GM12878 (cell line): ENCODE measurements at regions of chr14 and their contacts with region 1.

Region 1: DNA sequence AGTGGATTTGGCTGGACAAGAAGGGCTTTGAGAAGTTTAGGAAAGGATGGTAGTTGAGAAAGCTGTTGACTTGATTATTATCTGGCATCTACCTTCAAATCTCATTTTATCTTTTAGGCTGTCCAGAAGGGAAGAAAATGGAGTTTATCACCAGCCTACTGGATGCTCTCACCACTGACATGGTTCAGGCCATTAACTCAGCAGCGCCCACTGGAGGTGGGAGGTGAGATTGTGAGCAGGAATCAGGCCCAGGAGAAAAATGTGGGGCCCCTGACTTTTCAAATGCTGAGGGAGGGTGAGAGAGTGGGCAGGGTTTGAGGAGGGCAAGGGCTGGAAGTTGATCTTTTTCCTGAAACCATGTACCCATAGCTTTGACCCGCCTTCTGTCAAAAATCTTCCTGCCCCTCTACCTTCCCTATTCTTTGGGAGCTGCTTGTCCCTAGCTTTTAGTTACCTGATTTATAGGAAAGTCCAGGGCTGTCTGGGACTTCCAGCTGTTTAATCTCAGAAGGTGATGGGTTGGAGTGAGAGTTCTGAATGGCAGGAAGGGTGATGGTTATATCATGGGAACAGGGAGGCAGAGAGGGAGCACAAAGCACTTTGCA is 134.2 kb downstream of the SMOC1 start:
- DNase-seq: no peak
- ATAC-seq: peak; percentile 78
- H3K4me3 ChIP-seq: no peak overlapping the region
- H3K27ac ChIP-seq: no peak overlapping the region
- H3K4me1 ChIP-seq: peaks cover 27% of the 10 kb centered on the region
- H3K27me3 ChIP-seq: no peaks in the 10 kb centered on the region
- CTCF ChIP-seq: peak; percentile 50 to 90 (median 86)
- EP300 ChIP-seq: no peak
- POLR2A ChIP-seq: no peak
- RAD21 ChIP-seq: peak; percentile 59

Region 2: DNA sequence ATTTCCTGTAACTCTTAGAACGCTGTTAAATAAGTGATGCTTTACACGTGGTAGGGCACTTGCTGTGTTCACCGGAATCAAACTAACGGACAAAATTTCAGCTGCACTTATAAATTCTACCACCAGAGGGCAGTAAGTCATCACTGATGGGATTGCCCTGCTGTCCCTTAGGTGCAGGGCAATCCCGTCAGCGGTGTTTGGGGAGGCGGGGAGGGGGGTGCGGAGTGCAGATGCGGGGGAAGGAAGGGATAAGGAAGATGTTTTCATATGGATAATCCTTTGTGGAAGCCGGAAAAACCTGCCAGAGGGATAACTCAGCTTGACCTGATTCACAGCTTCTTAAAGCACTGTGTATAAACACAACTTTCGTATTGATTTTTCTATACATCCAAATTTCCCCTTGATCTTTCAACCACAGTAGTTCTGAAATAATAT is 194.6 kb before region 1 on chr14:
- CTCF ChIA-PET with region 1: interaction called, 20 read pairs
- POLR2A ChIA-PET with region 1: no interaction called
- RAD21 ChIA-PET with region 1: no interaction called
- SMC1A ChIA-PET with region 1: interaction called, 4 read pairs
- in situ Hi-C with region 1: no loop called
- intact Hi-C with region 1: no loop called
- DNase-seq: peak; percentile 55
- ATAC-seq: peak; percentile 95
- H3K4me3 ChIP-seq: no peak overlapping the region
- H3K27ac ChIP-seq: no peak overlapping the region
- H3K4me1 ChIP-seq: no peaks in the 10 kb centered on the region
- H3K27me3 ChIP-seq: no peaks in the 10 kb centered on the region; a peak in 1 of 4 replicates
- CTCF ChIP-seq: peak; percentile 71 to 79 (median 75)
- EP300 ChIP-seq: no peak
- POLR2A ChIP-seq: no peak
- RAD21 ChIP-seq: peak; percentile 99

Region 3: GRCh38 chr14:69879175-69880043 is 134.0 kb before region 1 on chr14 and contains the start of gene SMOC1:
- CTCF ChIA-PET with region 1: interaction called, 27 read pairs
- POLR2A ChIA-PET with region 1: no interaction called
- RAD21 ChIA-PET with region 1: interaction called, 3 read pairs
- SMC1A ChIA-PET with region 1: interaction called, 4 read pairs
- in situ Hi-C with region 1: no loop called
- intact Hi-C with region 1: loop called (anchors 5 kb)
- DNase-seq: no peak
- ATAC-seq: peak; percentile 64
- H3K4me3 ChIP-seq: no peak within 1 kb of the TSS
- H3K27ac ChIP-seq: no peak within 1 kb of the TSS
- H3K4me1 ChIP-seq: no peaks in the 10 kb centered on the region
- H3K27me3 ChIP-seq: peaks cover 8 to 10% of the 10 kb centered on the region in 2 experiments
- CTCF ChIP-seq: no peak
- EP300 ChIP-seq: no peak
- POLR2A ChIP-seq: no peak
- RAD21 ChIP-seq: no peak
- polyA plus RNA-seq, gene SMOC1: not detected

Region 4: DNA sequence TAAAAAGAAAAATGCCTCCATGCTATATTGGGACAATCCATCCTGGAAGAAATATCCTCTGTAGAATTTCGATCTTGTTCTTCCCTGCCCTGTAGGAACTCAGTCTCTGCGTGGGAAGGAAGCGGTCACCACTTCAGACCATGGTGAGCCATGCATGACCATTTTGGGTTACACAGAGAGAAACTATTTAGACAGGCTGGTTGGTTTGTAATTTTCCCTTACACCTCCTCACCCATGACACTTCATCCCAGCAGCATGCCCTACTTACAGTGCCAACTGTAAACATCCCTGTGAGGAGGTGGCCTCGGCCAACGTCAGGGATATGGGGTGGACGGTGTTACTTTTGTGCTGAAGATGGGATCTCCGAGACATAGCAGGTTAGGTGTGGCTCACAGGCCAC is 12.8 kb before region 1 on chr14:
- CTCF ChIA-PET with region 1: interaction called, 11 read pairs
- POLR2A ChIA-PET with region 1: no interaction called
- RAD21 ChIA-PET with region 1: no interaction called
- SMC1A ChIA-PET with region 1: interaction called, 3 read pairs
- in situ Hi-C with region 1: no loop called
- intact Hi-C with region 1: no loop called
- DNase-seq: no peak
- ATAC-seq: peak; percentile 82
- H3K4me3 ChIP-seq: no peak overlapping the region
- H3K27ac ChIP-seq: no peak overlapping the region
- H3K4me1 ChIP-seq: peaks cover 11% of the 10 kb centered on the region
- H3K27me3 ChIP-seq: no peaks in the 10 kb centered on the region
- CTCF ChIP-seq: no peak
- EP300 ChIP-seq: no peak
- POLR2A ChIP-seq: no peak
- RAD21 ChIP-seq: no peak

Region 5: DNA sequence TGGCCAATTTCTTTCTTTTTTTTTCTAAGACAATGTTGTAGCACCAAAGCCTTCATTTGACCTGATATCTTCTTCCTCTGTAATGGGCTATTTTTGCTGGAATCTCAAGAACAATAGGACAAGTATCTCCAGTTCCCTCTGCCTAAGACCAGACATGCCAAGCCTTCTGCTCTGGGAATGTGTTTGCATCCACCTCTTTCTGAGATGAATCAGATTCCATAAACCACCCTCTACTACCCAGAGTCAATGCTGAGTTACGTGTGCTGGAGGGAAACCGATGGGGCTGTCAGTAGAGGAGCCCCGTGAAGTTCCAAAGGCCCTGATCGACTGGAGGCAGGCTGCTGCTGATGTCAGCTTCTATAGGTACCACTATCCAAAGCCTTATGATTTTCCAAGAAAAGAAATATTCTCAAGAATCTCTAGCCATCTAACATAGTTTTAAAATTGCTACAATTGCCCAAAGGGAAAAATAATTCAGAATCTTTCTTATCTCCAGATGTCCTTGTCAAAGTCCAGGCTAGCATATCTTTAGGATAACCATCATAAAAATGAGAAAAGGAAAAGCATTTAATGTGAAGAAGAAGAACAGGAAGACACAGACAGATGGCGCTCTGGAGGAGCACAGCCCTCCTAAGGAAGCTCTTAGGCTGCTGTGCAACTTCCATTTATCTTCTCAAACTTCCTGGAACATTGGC is 73.5 kb after region 1 on chr14:
- CTCF ChIA-PET with region 1: no interaction called
- POLR2A ChIA-PET with region 1: no interaction called
- RAD21 ChIA-PET with region 1: no interaction called
- SMC1A ChIA-PET with region 1: no interaction called
- in situ Hi-C with region 1: no loop called
- intact Hi-C with region 1: no loop called
- DNase-seq: no peak
- ATAC-seq: peak; percentile 37; the same call in 1 of the 3 replicates
- H3K4me3 ChIP-seq: no peak overlapping the region
- H3K27ac ChIP-seq: no peak overlapping the region
- H3K4me1 ChIP-seq: no peaks in the 10 kb centered on the region
- H3K27me3 ChIP-seq: peaks cover 0 to 5% of the 10 kb centered on the region in 2 experiments; a peak in 2 of 4 replicates
- CTCF ChIP-seq: peak; percentile 47 to 59 (median 53); a peak in 4 of 6 replicates
- EP300 ChIP-seq: no peak
- POLR2A ChIP-seq: no peak
- RAD21 ChIP-seq: peak; percentile 65